ENCODE measurements at regions of chr18 and their contacts with region 1.

Region 1: GRCh38 chr18:12883684-12884405 is at the start of gene PTPN2:
- DNase-seq: peak; percentile 90
- H3K4me3 ChIP-seq: peak within 1 kb of the TSS; percentile 91
- H3K27ac ChIP-seq: peak within 1 kb of the TSS; percentile 98
- H3K27me3 ChIP-seq: peaks cover 2% of the 10 kb centered on the region
- CTCF ChIP-seq: no peak
- polyA plus RNA-seq, gene PTPN2: 19.8 and 25.9 TPM in 2 replicates

Region 2: GRCh38 chr18:12336875-12337274 is 547.0 kb before region 1 on chr18:
- CTCF ChIA-PET with region 1: no interaction called
- POLR2A ChIA-PET with region 1: interaction called, 13 read pairs
- DNase-seq: no peak
- H3K4me3 ChIP-seq: no peak overlapping the region
- H3K27ac ChIP-seq: no peak overlapping the region
- H3K27me3 ChIP-seq: no peaks in the 10 kb centered on the region
- CTCF ChIP-seq: no peak

Region 3: GRCh38 chr18:12556946-12557806 is 326.7 kb before region 1 on chr18:
- CTCF ChIA-PET with region 1: no interaction called
- POLR2A ChIA-PET with region 1: no interaction called
- DNase-seq: no peak
- H3K4me3 ChIP-seq: no peak overlapping the region
- H3K27ac ChIP-seq: no peak overlapping the region
- H3K27me3 ChIP-seq: no peaks in the 10 kb centered on the region
- CTCF ChIP-seq: no peak

Region 4: DNA sequence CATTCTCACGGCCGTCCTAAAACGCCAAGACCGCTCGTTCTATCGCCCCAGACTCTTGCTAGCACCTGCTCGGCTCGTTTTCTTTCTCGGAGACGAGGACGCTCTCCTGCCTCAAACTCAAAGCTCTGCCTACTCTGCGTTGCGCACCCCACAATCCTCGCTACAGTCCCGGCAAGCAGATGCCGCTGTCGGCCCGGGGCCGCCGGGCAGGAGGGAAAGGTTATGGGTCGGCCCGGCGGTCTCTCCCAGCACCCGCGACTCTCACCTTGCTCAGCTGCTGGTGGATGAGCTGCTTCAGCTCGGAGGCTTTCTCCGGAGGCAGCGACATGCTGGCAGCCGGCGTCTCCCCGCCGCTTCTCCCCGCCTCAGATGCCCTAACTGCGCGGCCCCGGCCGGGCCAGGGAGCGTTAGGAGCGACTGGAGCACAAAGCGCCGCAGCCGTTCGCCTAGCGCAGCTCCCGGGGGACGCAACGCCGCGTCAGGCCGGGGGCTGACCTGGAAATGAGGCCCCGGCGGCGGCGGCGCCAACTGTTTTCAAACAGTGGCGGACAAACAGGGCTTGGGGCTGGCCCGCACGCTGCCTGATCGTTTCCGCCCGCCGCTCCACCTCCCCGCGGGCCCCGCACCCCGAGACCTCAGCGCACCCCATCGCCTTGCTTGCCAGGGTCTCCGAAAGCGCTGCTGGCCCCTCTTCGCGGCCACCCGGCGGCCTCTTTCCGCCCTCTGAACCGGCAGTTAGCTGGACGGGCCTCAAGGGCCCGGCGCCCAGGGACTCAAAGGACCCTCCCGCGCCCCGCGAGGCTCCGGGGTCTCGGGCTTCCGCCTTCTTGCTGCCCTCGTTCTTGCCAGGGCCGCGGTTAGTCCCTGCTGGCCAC is 181.4 kb before region 1 on chr18 and contains the starts of genes CEP76 and PSMG2:
- CTCF ChIA-PET with region 1: no interaction called
- POLR2A ChIA-PET with region 1: interaction called, 14 read pairs
- DNase-seq: peak; percentile 46
- H3K4me3 ChIP-seq: peak within 1 kb of the TSS; percentile 90
- H3K27ac ChIP-seq: peak within 1 kb of the TSS; percentile 93
- H3K27me3 ChIP-seq: no peaks in the 10 kb centered on the region
- CTCF ChIP-seq: no peak
- polyA plus RNA-seq, gene CEP76: 5.6 and 7.6 TPM in 2 replicates
- polyA plus RNA-seq, gene PSMG2: 79.4 and 96.2 TPM in 2 replicates

Region 5: DNA sequence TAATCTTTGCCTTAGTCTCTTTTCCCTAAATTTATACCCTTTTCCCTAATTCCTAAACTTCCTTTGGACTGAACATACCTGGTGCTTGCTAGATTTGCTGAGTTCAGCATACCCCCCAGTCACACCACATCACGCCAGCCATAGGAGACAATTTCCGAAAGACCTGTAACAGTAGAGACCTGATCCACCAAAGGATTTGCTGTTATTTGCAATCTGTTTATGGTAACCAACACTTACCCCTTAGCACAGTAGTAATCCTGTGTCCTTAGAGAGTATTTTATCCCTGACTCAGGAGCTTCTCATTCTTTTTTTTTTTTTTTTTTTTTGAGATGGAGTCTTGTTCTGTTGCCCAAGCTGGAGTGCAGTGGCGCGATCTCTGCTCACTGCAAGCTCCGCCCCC is 172.4 kb before region 1 on chr18:
- CTCF ChIA-PET with region 1: interaction called, 4 read pairs
- POLR2A ChIA-PET with region 1: interaction called, 18 read pairs
- DNase-seq: no peak
- H3K4me3 ChIP-seq: no peak overlapping the region
- H3K27ac ChIP-seq: no peak overlapping the region
- H3K27me3 ChIP-seq: no peaks in the 10 kb centered on the region
- CTCF ChIP-seq: no peak

Region 6: GRCh38 chr18:12744103-12744502 is 139.7 kb before region 1 on chr18:
- CTCF ChIA-PET with region 1: interaction called, 29 read pairs
- POLR2A ChIA-PET with region 1: interaction called, 15 read pairs
- DNase-seq: peak; percentile 47
- H3K4me3 ChIP-seq: no peak overlapping the region
- H3K27ac ChIP-seq: no peak overlapping the region
- H3K27me3 ChIP-seq: no peaks in the 10 kb centered on the region
- CTCF ChIP-seq: peak; percentile 73

Region 7: DNA sequence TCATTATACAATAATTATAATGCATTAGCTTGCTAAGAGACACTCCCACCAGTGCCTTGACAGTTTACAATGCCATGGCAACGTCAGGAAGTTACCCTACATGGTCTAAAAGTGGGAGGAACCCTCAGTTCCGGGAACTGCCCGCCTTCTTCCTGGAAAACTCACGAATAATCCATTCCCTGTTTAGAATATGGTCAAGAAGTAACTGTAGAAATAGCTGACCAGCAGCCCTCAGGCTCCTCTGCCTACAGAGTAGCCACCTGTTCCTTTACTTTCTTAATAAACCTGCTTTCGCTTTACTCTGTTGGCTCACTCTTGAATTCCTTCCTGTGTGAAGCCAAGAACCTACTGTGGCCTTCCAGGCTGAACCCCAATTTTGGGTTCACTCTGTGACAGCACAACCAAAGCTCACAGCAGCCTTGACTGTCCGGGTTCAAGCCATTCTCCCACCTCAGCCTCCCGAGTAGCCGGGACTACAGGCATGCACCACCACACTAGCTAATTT is 20.2 kb after region 1 on chr18:
- CTCF ChIA-PET with region 1: no interaction called
- POLR2A ChIA-PET with region 1: interaction called, 10 read pairs
- DNase-seq: no peak
- H3K4me3 ChIP-seq: no peak overlapping the region
- H3K27ac ChIP-seq: no peak overlapping the region
- H3K27me3 ChIP-seq: peaks cover 11% of the 10 kb centered on the region
- CTCF ChIP-seq: no peak

Region 8: GRCh38 chr18:12934454-12935071 is 50.7 kb after region 1 on chr18:
- CTCF ChIA-PET with region 1: interaction called, 12 read pairs
- POLR2A ChIA-PET with region 1: interaction called, 6 read pairs
- DNase-seq: peak; percentile 63
- H3K4me3 ChIP-seq: no peak overlapping the region
- H3K27ac ChIP-seq: no peak overlapping the region
- H3K27me3 ChIP-seq: no peaks in the 10 kb centered on the region
- CTCF ChIP-seq: peak; percentile 97

Region 9: GRCh38 chr18:13151656-13152055 is 267.8 kb after region 1 on chr18:
- CTCF ChIA-PET with region 1: no interaction called
- POLR2A ChIA-PET with region 1: no interaction called
- DNase-seq: no peak
- H3K4me3 ChIP-seq: no peak overlapping the region
- H3K27ac ChIP-seq: no peak overlapping the region
- H3K27me3 ChIP-seq: peaks cover 6% of the 10 kb centered on the region
- CTCF ChIP-seq: no peak

Measured in AG04450 (cell line).